Activated CD4-positive, alpha-beta memory T cell treated with anti-CD3 and anti-CD28 coated beads, Interleukin-2, amount 10 ng/mL, durations not matched to agents 7 days and 5 days (primary cell): ENCODE measurements at regions of chr2 and their contacts with region 1.

Region 1: GRCh38 chr2:240851078-240851991 is 17.3 kb upstream of the AGXT start:
- DNase-seq: peak; percentile 85
- H3K4me3 Mint-ChIP-seq: no peak overlapping the region
- H3K27ac Mint-ChIP-seq: no peak overlapping the region
- H3K4me1 Mint-ChIP-seq: no peaks in the 10 kb centered on the region
- H3K27me3 Mint-ChIP-seq: no peaks in the 10 kb centered on the region

Region 2: DNA sequence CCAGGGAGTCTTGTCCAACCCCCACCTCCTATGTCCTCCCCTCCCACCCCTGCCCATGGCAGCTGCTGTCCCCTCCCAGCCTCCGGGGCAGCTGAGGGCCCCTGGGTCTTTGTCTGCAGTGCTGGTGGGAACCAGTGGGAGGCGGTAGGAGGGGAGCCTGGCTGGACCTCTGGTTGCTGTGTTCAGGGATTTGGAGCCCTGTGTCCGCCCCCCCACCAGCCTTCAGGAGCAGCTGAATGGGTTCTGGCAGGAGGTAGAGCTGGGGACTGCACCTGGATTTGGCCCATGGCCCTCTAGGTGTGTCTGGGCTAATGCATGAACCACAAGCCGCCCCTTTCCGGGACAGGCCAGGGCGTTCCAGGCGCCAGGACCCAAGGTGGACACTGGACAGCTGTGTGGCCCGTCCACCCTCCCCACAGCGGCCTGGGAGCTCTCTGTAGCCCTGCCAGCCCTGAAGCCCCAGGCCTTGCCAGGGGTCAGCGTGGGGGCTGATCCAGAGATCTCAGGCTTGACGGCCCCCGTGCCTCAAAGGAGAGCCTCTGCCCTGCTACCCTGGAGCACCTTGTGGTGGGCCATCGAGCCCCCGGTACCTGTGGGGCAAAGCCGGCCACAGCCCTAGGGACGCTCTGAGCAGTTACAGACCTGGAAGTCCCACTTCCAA is 390.4 kb before region 1 on chr2:
- CTCF ChIA-PET with region 1: no interaction called
- POLR2A ChIA-PET with region 1: no interaction called
- DNase-seq: no peak
- H3K4me3 Mint-ChIP-seq: no peak overlapping the region
- H3K27ac Mint-ChIP-seq: no peak overlapping the region
- H3K4me1 Mint-ChIP-seq: no peaks in the 10 kb centered on the region
- H3K27me3 Mint-ChIP-seq: peaks cover 9% of the 10 kb centered on the region

Region 3: GRCh38 chr2:240861554-240861953 is 10.2 kb after region 1 on chr2:
- CTCF ChIA-PET with region 1: interaction called, 10 read pairs
- POLR2A ChIA-PET with region 1: no interaction called
- DNase-seq: no peak
- H3K4me3 Mint-ChIP-seq: no peak overlapping the region
- H3K27ac Mint-ChIP-seq: no peak overlapping the region
- H3K4me1 Mint-ChIP-seq: no peaks in the 10 kb centered on the region
- H3K27me3 Mint-ChIP-seq: peaks cover 23% of the 10 kb centered on the region

Region 4: DNA sequence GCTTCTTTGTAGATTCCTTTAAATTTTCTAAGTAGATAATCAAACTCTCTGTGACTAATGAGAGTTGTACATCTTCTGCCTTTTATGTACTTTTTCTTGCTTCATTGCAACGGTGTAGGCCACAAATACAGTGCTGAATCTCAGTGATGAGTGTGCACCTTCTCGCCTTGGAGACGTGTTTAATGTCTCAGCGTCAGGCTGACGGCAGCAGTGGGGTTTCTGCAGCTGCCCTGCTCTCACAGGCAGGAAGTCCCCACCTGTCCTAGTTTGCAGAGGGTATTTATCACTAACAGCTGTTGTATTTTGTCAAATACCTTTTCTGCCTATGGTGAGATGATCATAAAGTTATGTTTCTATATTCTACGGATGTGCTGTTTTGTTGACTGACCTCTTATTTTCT is 30.6 kb after region 1 on chr2:
- CTCF ChIA-PET with region 1: no interaction called
- POLR2A ChIA-PET with region 1: no interaction called
- DNase-seq: no peak
- H3K4me3 Mint-ChIP-seq: no peak overlapping the region
- H3K27ac Mint-ChIP-seq: no peak overlapping the region
- H3K4me1 Mint-ChIP-seq: no peaks in the 10 kb centered on the region
- H3K27me3 Mint-ChIP-seq: peaks cover 7% of the 10 kb centered on the region